Aorta (tissue), 5 donors: ENCODE measurements at regions of chr5 and their contacts with region 1.

Region 1: GRCh38 chr5:53095931-53096525 is 13.5 kb downstream of the MOCS2 start:
- DNase-seq: peak in 1 of 2 donors; percentile 56
- ATAC-seq: peak; percentile 85
- H3K4me3 ChIP-seq: no peak overlapping the region
- H3K27ac ChIP-seq: no peak overlapping the region
- H3K4me1 ChIP-seq: peaks cover 0 to 3% of the 10 kb centered on the region in 2 donors
- H3K27me3 ChIP-seq: no peaks in the 10 kb centered on the region

Region 2: DNA sequence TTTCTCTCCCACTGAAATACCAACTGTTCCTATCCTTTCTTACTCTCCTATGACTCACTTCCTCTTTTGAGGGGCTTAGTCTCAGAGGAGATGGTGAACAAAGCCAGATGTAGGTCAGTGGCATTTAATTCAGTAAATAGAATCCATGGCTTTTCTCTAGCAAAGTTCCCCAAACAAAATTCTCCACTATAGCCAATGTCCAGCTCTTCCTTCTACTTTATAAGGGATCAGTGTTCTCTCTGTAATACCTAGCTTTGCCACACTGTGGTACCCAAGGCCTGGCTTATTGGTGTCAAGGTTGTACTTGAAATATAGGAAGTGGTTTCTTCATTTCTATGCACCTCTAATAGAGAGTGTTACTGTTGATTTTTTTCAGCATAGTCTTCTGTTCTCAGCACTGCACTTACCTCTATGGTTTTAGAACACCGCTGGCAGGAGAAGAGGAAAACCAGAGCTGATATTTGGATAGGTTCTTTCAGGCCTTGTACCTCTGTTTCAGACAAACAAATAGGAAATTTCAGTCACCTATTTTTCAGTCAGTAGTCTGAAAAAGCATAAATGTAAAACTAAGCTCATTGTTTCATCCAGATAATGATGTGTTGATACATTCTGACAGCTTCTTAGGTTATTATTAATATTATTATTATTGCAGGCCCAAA is 147.5 kb before region 1 on chr5:
- intact Hi-C with region 1: loop called (anchors 2 kb)
- DNase-seq: peak in 1 of 2 donors; percentile 50
- ATAC-seq: peak; percentile 88
- H3K4me3 ChIP-seq: no peak overlapping the region
- H3K27ac ChIP-seq: no peak overlapping the region
- H3K4me1 ChIP-seq: no peaks in the 10 kb centered on the region
- H3K27me3 ChIP-seq: no peaks in the 10 kb centered on the region